Activated CD4-positive, alpha-beta T cell treated with anti-CD3 and anti-CD28 coated beads, Interleukin-2, amount 10 ng/mL, durations not matched to agents 24 days and 14 days (primary cell): ENCODE measurements at regions of chr14 and their contacts with region 1.

Region 1: DNA sequence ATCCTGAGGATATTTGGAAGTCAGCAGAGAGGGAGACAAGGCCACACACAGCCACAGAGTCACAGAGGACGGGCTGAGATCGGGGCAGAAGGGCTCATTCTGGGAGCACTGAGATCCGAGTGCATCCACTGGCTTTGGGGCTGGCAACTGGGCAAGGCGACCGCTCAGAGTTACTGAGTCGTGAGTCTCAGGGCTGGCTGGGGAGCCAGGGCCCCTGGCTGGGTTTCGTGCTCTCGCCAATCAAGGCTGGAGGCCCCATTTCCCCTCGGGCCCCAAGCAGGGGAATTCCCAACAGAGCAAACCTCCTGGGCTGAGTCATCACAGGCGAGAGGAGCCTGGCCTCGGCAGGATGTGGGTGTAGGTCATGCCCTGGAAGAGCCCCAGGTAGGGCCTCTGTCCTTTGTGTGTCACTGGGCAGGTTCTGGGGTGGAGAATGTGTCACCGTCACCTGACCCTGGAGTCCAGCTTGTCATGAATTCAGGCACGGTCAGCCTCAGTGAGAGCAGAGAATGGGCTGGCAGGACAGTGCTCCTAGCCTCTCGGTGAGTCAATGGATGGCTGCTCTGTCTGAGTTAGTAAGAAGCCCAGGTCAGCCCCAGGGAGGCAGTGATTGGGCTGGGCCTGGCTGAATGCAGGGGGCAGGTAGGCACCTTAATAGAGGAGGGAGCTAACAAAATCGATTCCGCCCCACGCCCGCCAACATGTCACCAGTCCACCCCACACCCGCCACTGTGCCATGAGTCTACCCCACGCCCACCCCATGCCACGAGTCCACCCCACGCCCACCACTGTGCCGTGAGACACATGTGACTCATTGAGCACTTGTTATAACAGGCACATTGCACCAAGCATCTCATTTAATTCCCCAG is 16.9 kb downstream of the ASB2 start:
- DNase-seq: peak; percentile 98
- H3K4me3 Mint-ChIP-seq: peak overlapping the region; percentile 86
- H3K27ac Mint-ChIP-seq: peak overlapping the region; percentile 100
- H3K4me1 Mint-ChIP-seq: peaks cover 93% of the 10 kb centered on the region
- H3K27me3 Mint-ChIP-seq: no peaks in the 10 kb centered on the region

Region 2: DNA sequence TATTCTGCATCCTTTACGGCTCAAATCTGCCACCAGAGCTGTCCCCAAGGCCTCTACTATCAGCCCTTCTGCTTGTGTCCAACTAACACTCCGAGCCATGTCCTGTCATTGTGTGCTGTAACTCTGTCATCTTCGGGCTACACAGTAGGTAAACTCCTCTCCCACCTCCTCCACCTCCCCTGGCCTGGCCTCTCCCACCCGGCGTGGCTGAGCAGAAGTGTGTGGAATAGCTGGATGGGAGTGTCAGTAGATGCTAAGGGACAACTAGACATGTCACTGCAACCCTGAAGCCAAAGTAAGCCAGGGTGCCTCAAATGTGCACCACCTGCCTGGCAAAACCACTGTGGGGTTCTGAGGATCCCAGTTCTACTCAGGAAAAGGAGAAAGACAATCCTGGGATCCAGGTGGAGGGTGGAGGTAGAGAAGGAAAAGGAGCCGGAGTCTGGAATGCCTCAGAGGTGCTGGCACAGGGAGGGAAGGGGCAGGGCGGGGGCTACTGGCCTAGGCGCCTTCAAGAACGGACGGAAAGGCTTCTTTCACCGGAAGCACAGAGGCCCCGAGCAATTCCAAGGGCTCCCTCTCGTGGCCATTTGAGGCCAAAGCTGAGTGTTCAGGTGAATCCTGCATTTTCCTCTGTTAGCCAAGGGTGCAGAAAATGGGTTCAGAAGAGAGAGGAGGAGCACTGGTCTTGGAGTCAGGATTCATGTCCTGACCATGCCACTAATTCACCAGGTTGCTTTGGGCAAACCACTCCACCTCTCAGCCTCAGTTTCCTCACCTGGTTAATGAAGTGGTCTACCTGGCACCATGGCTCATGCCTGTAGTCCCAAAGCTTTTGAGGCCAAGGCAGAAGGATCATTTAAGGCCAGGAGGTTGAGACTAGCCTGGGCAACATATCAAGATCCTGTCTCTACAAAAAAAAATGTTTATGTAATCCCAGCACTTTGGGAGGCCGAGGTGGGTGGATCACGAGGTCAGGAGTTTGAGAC is 52.8 kb before region 1 on chr14:
- intact Hi-C with region 1: no loop called
- DNase-seq: peak; percentile 89
- H3K4me3 Mint-ChIP-seq: no peak overlapping the region
- H3K27ac Mint-ChIP-seq: peak overlapping the region; percentile 54
- H3K4me1 Mint-ChIP-seq: no peaks in the 10 kb centered on the region
- H3K27me3 Mint-ChIP-seq: peaks cover 15% of the 10 kb centered on the region

Region 3: DNA sequence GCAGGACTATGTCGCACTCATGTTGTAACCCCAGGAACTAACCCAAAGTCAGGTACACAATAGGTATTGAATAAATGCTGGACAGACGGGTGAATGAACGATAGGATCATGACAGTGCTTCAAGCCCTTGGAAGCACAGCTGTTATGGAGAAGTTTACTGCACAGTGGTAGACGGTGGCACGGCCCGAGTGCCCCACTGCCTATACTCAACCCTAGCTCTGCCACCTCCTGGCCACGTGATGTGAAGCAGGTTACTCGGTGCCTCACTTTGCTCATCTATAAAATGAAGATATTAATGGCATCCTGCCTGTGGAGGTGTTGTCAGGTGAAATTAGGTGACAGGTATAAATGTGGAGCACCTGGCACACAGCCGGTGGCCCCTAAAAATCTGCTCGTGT is 11.1 kb after region 1 on chr14:
- intact Hi-C with region 1: loop called (anchors 1 kb)
- DNase-seq: peak; percentile 85
- H3K4me3 Mint-ChIP-seq: peak overlapping the region; percentile 83
- H3K27ac Mint-ChIP-seq: peak overlapping the region; percentile 98
- H3K4me1 Mint-ChIP-seq: peaks cover 70% of the 10 kb centered on the region
- H3K27me3 Mint-ChIP-seq: no peaks in the 10 kb centered on the region

Region 4: DNA sequence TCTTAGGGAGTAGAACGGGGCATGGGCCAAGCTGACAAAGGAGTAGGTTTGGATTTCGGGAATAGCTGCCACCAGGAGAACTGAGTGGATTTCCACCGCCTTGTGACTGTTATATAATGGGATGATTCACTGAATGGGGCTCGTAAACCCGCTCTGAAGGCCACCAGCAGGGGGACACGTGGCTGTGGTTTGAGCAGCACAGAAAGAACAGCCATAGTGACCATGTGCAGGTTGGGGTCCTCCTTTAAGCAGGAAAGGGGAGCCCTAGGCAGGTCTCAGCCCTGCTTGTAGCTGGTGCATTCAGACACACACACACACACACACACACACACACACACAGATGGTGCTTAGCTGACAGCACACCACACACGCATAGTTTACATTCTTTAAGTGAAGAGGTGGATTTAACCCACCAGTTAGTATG is 25.5 kb after region 1 on chr14:
- intact Hi-C with region 1: no loop called
- DNase-seq: no peak
- H3K4me3 Mint-ChIP-seq: no peak overlapping the region
- H3K27ac Mint-ChIP-seq: no peak overlapping the region
- H3K4me1 Mint-ChIP-seq: peaks cover 15% of the 10 kb centered on the region
- H3K27me3 Mint-ChIP-seq: no peaks in the 10 kb centered on the region

Region 5: GRCh38 chr14:94001501-94002396 is 42.3 kb after region 1 on chr14:
- intact Hi-C with region 1: loop called (anchors 1 kb)
- DNase-seq: peak; percentile 88
- H3K4me3 Mint-ChIP-seq: peak overlapping the region; percentile 32
- H3K27ac Mint-ChIP-seq: peak overlapping the region; percentile 77
- H3K4me1 Mint-ChIP-seq: peaks cover 39% of the 10 kb centered on the region
- H3K27me3 Mint-ChIP-seq: no peaks in the 10 kb centered on the region